ENCODE measurements at regions of chr3 and their contacts with region 1.

Region 1: DNA sequence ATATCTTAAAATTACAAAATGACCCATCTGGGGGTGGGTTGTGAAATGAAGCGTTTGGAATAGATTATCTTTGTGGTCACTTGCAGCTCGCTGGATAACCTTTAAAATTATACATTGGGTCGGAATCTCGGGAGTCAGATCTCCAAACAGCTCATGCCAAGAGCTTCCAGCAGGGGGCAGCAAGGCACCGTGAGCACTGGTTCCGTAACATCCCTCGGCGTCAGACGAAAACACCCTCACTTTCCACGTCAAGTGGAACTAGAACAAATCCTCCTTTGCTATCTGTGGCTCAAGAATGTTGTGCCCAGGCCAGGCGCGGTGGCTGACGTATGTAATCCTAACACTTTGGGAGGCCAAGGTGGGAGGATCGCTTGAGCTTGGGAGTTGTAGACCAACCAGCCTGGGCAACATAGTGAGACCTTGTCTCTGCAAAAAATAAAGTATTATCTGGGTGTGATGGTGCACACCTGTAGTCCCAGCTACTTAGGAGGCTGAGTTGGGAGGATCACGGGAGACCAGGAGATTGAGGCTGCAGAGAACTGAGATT is 31.1 kb downstream of the UMPS start:
- DNase-seq: peak; percentile 88
- ATAC-seq: peak; percentile 90
- H3K4me3 Mint-ChIP-seq: peak overlapping the region; percentile 29
- H3K27ac Mint-ChIP-seq: no peak overlapping the region
- H3K4me1 Mint-ChIP-seq: peaks cover 9% of the 10 kb centered on the region
- H3K27me3 Mint-ChIP-seq: no peaks in the 10 kb centered on the region

Region 2: DNA sequence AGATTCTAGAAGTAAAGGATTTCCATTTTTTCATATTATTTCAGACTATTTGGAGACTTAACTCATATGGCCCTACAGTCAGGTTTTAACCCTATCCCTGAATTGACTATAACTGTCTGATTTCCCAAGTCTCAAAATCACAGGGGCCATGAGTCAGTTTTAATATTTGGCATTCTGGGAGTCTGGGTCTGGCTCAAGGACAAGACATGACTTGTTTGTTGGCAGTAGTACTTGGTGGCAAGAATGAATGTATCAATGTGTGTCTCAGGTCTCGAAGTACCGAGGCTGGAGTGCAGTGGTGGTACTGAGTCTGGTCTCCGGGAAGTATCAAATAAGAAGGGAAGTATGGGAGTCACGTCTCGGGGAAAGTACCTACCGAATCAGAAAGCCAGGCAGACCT is 20.3 kb before region 1 on chr3:
- CTCF ChIA-PET with region 1: interaction called, 10 read pairs
- POLR2A ChIA-PET with region 1: no interaction called
- intact Hi-C with region 1: no loop called
- DNase-seq: no peak
- ATAC-seq: no peak
- H3K4me3 Mint-ChIP-seq: no peak overlapping the region
- H3K27ac Mint-ChIP-seq: no peak overlapping the region
- H3K4me1 Mint-ChIP-seq: peaks cover 10% of the 10 kb centered on the region
- H3K27me3 Mint-ChIP-seq: no peaks in the 10 kb centered on the region

Region 3: DNA sequence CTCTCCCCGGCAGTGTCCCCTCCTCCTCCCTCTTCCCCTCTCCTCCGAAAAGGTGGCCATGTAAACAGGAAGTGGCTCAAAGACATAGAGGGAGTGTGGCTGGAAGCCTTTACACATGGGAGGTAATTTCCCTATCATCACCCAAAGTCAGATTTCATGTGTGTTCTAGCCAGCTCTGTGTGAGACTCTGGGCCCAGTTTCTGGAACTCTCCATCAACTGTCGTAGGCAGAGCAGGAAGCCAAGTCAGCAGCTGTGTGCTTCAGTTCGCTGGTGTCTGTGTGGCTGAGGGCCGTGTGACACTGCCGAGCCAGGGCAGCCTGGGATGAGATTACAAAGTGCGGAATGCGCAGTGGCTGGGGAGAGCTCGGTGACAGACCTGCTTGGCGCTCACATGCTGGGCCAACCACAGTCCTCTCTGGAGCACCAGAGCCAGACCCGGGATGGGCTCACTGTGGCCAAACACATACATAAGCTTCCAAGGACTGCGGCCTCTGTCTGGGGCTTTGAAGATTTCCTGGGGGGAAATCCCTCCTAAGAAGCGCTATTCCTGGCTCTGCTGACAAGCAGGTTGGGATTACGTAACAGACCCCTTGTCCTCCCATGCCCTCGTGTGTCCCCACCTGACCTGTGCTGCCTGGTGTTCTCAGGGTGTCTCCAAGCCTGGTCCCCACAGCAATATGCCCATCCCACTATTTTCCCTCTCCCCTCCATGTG is 19.6 kb after region 1 on chr3:
- CTCF ChIA-PET with region 1: interaction called, 10 read pairs
- POLR2A ChIA-PET with region 1: no interaction called
- intact Hi-C with region 1: no loop called
- DNase-seq: no peak
- ATAC-seq: peak; percentile 42
- H3K4me3 Mint-ChIP-seq: no peak overlapping the region
- H3K27ac Mint-ChIP-seq: no peak overlapping the region
- H3K4me1 Mint-ChIP-seq: peaks cover 6% of the 10 kb centered on the region
- H3K27me3 Mint-ChIP-seq: no peaks in the 10 kb centered on the region

Region 4: DNA sequence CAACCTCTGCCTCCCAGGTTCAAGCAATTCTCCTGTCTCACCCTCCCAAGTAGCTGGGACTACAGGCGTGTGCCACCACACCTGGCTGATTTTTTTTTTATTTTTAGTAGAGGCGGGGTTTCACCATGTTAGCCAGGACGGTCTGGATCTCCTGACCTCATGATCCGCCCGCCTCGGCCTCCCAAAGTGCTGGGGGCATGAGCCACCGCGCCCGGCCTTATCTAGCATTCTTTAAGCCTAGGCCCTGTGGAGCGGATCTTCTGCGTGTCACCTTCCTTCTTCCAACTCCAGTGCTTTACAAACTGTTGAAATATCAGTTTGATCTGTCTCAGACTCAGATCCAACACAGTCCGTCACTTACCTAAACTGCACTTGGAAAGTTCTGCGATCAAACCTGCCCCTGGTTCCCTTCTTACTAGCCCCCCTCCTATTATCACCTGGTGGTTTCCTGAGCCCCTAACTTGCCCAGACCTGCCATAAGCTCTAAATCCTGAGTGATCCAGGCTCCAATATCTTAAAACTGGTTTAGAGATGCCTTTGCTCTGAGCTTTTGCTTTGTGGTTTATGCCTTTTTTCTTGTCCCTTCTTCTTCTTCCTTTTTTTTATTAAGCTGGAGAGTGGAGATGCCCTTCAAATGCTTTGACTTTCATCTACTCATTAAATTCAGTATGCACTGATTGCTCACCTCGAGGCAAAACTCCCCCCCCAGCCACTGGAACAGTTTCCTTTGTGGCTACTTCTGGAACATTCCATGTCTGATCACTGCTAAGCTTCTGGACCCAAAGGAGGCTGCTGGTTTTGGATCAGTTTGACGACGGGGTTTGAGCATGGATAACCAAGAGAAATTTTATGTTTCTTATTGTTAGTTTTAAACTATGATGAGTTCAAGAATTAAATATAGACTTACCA is 129.2 kb after region 1 on chr3:
- CTCF ChIA-PET with region 1: interaction called, 14 read pairs
- POLR2A ChIA-PET with region 1: no interaction called
- intact Hi-C with region 1: no loop called
- DNase-seq: no peak
- ATAC-seq: no peak
- H3K4me3 Mint-ChIP-seq: no peak overlapping the region
- H3K27ac Mint-ChIP-seq: no peak overlapping the region
- H3K4me1 Mint-ChIP-seq: no peaks in the 10 kb centered on the region
- H3K27me3 Mint-ChIP-seq: peaks cover 25% of the 10 kb centered on the region

Region 5: DNA sequence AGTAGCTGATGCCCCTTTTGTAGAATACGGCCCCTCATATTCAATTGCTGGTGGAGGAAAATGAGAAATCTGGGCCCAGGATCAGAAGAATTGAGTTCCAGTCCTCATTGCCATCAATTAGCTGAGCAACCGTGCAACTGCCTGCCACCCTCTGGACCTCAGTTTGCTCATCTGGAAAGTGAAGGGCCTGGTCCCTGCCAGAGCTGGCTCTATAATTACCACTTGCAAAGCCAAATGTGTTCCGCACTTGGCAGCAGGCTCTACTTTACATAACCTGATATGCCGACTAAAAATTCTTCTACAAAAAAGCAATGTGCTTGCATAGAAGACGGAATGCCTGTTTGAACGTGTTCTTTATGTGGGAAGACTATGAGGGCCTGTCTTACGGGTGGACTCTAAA is 134.4 kb after region 1 on chr3:
- CTCF ChIA-PET with region 1: interaction called, 151 read pairs
- POLR2A ChIA-PET with region 1: interaction called, 5 read pairs
- intact Hi-C with region 1: no loop called
- DNase-seq: no peak
- ATAC-seq: no peak
- H3K4me3 Mint-ChIP-seq: no peak overlapping the region
- H3K27ac Mint-ChIP-seq: no peak overlapping the region
- H3K4me1 Mint-ChIP-seq: peaks cover 5% of the 10 kb centered on the region
- H3K27me3 Mint-ChIP-seq: peaks cover under 1% of the 10 kb centered on the region

Region 6: GRCh38 chr3:124905849-124906248 is 144.5 kb after region 1 on chr3:
- CTCF ChIA-PET with region 1: interaction called, 151 read pairs
- POLR2A ChIA-PET with region 1: interaction called, 5 read pairs
- intact Hi-C with region 1: loop called (anchors 1 kb)
- DNase-seq: no peak
- ATAC-seq: no peak
- H3K4me3 Mint-ChIP-seq: no peak overlapping the region
- H3K27ac Mint-ChIP-seq: no peak overlapping the region
- H3K4me1 Mint-ChIP-seq: peaks cover 2% of the 10 kb centered on the region
- H3K27me3 Mint-ChIP-seq: peaks cover 2% of the 10 kb centered on the region

Region 7: DNA sequence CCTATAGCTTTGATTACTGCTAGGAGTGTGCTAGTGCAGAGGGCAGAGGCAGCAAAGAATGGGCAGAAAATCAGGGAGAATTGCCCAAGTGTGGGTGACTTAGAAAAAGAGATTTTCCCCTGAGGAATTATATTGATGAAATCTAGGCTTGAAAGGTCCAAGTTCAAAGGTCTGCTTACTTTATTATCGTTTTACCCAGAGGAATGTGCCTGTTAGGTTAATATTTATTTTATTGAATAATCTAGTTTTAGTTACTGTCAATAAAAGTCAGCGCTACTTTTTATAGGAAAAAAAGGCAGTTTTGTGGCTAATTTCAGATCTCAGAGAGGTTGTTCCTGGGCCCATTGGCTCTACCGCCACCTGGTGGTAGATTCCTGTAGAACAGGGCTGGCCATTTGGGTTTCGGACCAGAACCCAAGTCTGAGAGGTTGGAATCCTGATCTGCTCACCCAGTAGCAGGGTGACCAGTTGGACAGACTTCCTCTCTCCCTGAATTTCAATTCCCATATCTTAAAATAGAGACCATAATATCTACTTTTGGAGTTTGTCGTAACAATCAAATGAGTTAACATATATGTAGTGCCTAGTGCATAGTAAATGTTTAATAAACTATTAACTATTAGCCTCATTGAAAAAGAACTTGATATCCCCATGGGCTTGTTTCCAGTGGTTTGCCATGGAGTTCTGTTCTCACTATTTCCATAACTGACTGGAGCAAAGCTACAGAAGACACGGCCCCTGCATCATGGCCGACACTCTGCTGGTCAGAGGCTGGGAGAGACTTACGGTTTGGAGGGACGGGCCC is 676.5 kb after region 1 on chr3:
- CTCF ChIA-PET with region 1: interaction called, 9 read pairs
- POLR2A ChIA-PET with region 1: no interaction called
- intact Hi-C with region 1: loop called (anchors 2 kb)
- DNase-seq: peak; percentile 76
- ATAC-seq: peak; percentile 60
- H3K4me3 Mint-ChIP-seq: no peak overlapping the region
- H3K27ac Mint-ChIP-seq: no peak overlapping the region
- H3K4me1 Mint-ChIP-seq: peaks cover 3% of the 10 kb centered on the region
- H3K27me3 Mint-ChIP-seq: no peaks in the 10 kb centered on the region

Measured in activated CD4-positive, alpha-beta T cell treated with anti-CD3 and anti-CD28 coated beads for 36 hours (primary cell).